ENCODE measurements at regions of chr2 and their contacts with region 1.

Region 1: GRCh38 chr2:108583903-108584520 is 49.7 kb downstream of the LIMS1 start:
- DNase-seq: no peak
- ATAC-seq: peak; percentile 75

Region 2: GRCh38 chr2:108351889-108352288 is 232.1 kb before region 1 on chr2:
- intact Hi-C with region 1: loop called (anchors 2 kb)
- DNase-seq: no peak
- ATAC-seq: no peak